CD8-positive, alpha-beta memory T cell (primary cell): ENCODE measurements at regions of chr22 and their contacts with region 1.

Region 1: GRCh38 chr22:43385770-43386641 is 25.8 kb upstream of the MPPED1 start:
- DNase-seq: peak; percentile 54 to 82 (median 61)
- H3K4me3 ChIP-seq: no peak overlapping the region
- H3K4me3 Mint-ChIP-seq: peak overlapping the region in 2 of 7 donors; percentile 20 to 47
- H3K27ac ChIP-seq: no peak overlapping the region
- H3K27ac Mint-ChIP-seq: no peak overlapping the region
- H3K4me1 ChIP-seq: peaks cover 3% of the 10 kb centered on the region
- H3K4me1 Mint-ChIP-seq: peaks cover 11 to 23% (median 16%) of the 10 kb centered on the region in 3 donors
- H3K27me3 ChIP-seq: peaks cover 11% of the 10 kb centered on the region
- H3K27me3 Mint-ChIP-seq: peaks cover 17 to 24% of the 10 kb centered on the region in 2 donors

Region 2: GRCh38 chr22:43230971-43231723 is 154.9 kb before region 1 on chr22:
- CTCF ChIA-PET with region 1: interaction called, 46 read pairs
- POLR2A ChIA-PET with region 1: no interaction called
- DNase-seq: peak; percentile 41 to 76 (median 49)
- H3K4me3 ChIP-seq: no peak overlapping the region
- H3K4me3 Mint-ChIP-seq: no peak overlapping the region
- H3K27ac ChIP-seq: no peak overlapping the region
- H3K27ac Mint-ChIP-seq: no peak overlapping the region
- H3K4me1 ChIP-seq: peaks cover 4% of the 10 kb centered on the region
- H3K4me1 Mint-ChIP-seq: peaks cover 4 to 5% (median 5%) of the 10 kb centered on the region in 3 donors
- H3K27me3 ChIP-seq: no peaks in the 10 kb centered on the region
- H3K27me3 Mint-ChIP-seq: peaks cover 3 to 8% of the 10 kb centered on the region in 2 donors

Region 3: DNA sequence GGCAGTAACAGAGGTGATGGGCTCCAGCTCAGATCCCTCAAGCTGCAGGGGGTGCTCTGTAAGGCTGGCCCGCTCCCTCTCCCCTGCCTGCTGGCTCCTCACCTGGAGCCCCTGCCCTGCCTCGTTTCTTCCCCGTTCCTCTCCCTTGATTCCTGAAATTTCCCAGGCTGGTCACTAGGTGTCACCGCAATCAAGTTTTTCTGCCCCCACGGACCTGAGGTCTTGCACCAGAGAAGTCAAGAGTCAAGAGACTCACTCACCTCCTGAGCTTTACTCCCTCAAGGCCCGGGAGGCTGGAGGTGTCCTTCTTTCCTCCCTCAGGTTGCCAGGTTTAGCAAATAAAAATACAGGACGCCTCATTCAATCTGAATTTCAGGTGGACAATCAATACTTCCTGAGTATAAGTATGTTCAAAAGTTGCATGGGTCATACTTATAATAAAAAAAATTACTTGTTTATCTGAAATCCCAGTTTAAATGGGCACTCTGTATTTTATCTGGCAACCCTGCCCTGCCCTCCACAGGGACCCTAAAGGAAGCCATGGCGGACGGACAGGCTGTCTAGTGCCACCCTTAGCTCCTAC is 112.0 kb before region 1 on chr22:
- CTCF ChIA-PET with region 1: interaction called, 48 read pairs
- POLR2A ChIA-PET with region 1: no interaction called
- DNase-seq: peak in 4 of 5 donors; percentile 17 to 55 (median 33)
- H3K4me3 ChIP-seq: no peak overlapping the region
- H3K4me3 Mint-ChIP-seq: no peak overlapping the region
- H3K27ac ChIP-seq: no peak overlapping the region
- H3K27ac Mint-ChIP-seq: peak overlapping the region in 1 of 8 donors; percentile 20
- H3K4me1 ChIP-seq: no peaks in the 10 kb centered on the region
- H3K4me1 Mint-ChIP-seq: peaks cover 4 to 5% (median 4%) of the 10 kb centered on the region in 3 donors
- H3K27me3 ChIP-seq: no peaks in the 10 kb centered on the region
- H3K27me3 Mint-ChIP-seq: peaks cover 2 to 5% of the 10 kb centered on the region in 2 donors

Region 4: DNA sequence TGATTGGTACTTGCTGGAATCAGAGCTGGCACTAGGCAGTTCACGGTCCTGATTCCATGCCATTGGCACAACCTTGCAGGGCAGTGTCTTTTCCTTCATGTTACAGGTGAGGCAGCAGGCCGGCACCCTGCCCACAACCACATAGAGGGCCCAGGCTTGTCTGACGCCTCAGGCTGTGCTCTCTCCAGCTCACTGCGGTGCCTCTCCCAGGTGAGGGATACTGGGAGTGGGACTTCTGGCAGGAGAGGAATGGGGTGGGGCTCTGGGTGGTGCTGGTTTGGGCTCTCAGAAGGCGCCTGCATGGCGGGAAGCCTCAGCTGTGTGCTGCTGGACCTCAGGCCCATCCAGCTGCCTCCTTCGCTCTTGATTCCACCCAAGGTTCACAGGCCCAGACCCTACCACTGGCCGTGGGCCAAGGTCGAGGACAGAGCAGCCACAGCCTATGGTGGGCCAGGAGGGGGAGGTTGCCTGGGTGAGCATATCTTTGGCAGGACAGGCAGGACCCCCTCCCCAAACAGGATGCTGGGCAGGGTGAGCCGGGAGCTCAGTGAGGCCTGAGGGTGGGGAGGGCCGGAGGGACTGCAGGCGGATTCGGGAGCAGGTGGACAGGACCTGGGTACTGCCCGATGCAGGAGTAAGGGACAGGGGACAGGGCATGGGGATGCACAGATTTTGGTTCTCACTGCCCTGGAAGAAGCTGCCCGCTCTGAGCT is 18.8 kb after region 1 on chr22:
- CTCF ChIA-PET with region 1: interaction called, 20 read pairs
- POLR2A ChIA-PET with region 1: no interaction called
- DNase-seq: peak in 1 of 5 donors; percentile 26
- H3K4me3 ChIP-seq: no peak overlapping the region
- H3K4me3 Mint-ChIP-seq: no peak overlapping the region
- H3K27ac ChIP-seq: no peak overlapping the region
- H3K27ac Mint-ChIP-seq: no peak overlapping the region
- H3K4me1 ChIP-seq: no peaks in the 10 kb centered on the region
- H3K4me1 Mint-ChIP-seq: no peaks in the 10 kb centered on the region
- H3K27me3 ChIP-seq: no peaks in the 10 kb centered on the region
- H3K27me3 Mint-ChIP-seq: peaks cover 17 to 37% of the 10 kb centered on the region in 2 donors